Sigmoid colon (tissue), 7 donors: ENCODE measurements at regions of chr11 and their contacts with region 1.

Region 1: DNA sequence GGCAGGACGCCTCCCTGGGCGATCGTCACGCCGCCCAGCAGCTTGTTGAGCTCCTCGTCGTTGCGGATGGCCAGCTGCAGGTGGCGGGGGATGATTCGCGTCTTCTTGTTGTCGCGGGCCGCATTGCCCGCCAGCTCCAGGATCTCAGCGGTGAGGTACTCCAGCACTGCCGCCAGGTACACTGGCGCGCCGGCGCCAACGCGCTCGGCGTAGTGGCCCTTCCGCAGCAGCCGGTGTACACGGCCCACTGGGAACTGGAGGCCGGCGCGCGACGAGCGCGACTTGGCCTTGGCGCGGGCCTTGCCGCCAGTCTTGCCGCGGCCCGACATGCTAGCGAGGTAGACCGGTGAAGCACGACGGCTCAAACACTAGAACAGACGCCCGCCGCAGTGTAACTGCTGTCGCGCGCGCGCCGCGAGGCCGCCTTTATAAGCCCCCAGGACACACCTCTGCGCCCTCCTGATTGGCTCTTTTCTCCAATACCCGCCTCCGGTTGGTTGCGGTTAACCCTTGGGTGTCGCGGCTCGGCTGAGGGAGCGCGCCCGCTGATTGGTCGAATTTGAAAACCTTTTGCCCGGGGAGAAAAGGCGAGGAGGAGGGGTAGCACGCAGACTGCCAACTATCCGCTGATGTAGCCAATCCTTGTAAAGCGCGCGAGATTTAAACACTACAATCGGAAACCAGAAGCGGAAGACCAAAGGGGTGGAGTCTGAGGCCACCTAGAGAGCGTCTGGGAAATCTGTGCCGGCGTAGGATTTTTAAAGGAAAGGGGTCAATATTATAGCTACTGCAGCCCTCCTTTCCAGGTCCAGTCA is 6.4 kb downstream of the DPAGT1 start:
- DNase-seq: peak; percentile 100
- H3K4me3 ChIP-seq: peak overlapping the region; percentile 71 to 96 (median 86)
- H3K27ac ChIP-seq: peak overlapping the region; percentile 97 to 99 (median 98)
- H3K4me1 ChIP-seq: peaks cover 0 to 40% (median 25%) of the 10 kb centered on the region in 4 donors
- H3K27me3 ChIP-seq: no peaks in the 10 kb centered on the region
- CTCF ChIP-seq: peak in 2 of 4 experiments; percentile 4 to 36
- EP300 ChIP-seq: no peak
- POLR2A ChIP-seq: peak; percentile 94 to 97

Region 2: GRCh38 chr11:119018074-119018938 is 77.0 kb before region 1 on chr11 and contains the starts of genes RPS25 and TRAPPC4:
- intact Hi-C with region 1: loop called (anchors 5 kb)
- DNase-seq: peak; percentile 98
- H3K4me3 ChIP-seq: peak within 1 kb of the TSS; percentile 84 to 96 (median 90)
- H3K27ac ChIP-seq: peak within 1 kb of the TSS; percentile 96 to 98 (median 97)
- H3K4me1 ChIP-seq: peaks cover 0 to 48% (median 44%) of the 10 kb centered on the region in 4 donors
- H3K27me3 ChIP-seq: no peaks in the 10 kb centered on the region
- CTCF ChIP-seq: peak in 1 of 4 experiments; percentile 3
- EP300 ChIP-seq: no peak
- POLR2A ChIP-seq: peak; percentile 73 to 80
- total RNA-seq, gene RPS25: 1,350 to 3,369 (median 2,098) TPM
- total RNA-seq, gene TRAPPC4: 32.4 to 60.3 (median 47.5) TPM

Region 3: GRCh38 chr11:119196833-119197483 is 101.7 kb after region 1 on chr11:
- intact Hi-C with region 1: loop called (anchors 2 kb)
- DNase-seq: peak; percentile 77
- H3K4me3 ChIP-seq: no peak overlapping the region
- H3K27ac ChIP-seq: no peak overlapping the region
- H3K4me1 ChIP-seq: no peaks in the 10 kb centered on the region
- H3K27me3 ChIP-seq: no peaks in the 10 kb centered on the region
- CTCF ChIP-seq: peak; percentile 55 to 80 (median 72)
- EP300 ChIP-seq: no peak
- POLR2A ChIP-seq: no peak

Region 4: GRCh38 chr11:119315131-119316015 is 220.1 kb after region 1 on chr11:
- intact Hi-C with region 1: loop called (anchors 2 kb)
- DNase-seq: peak; percentile 79
- H3K4me3 ChIP-seq: peak overlapping the region; percentile 62 to 90 (median 76)
- H3K27ac ChIP-seq: peak overlapping the region; percentile 93 to 99 (median 96)
- H3K4me1 ChIP-seq: peaks cover 0 to 66% (median 49%) of the 10 kb centered on the region in 4 donors
- H3K27me3 ChIP-seq: no peaks in the 10 kb centered on the region
- CTCF ChIP-seq: peak in 2 of 4 experiments; percentile 19 to 42
- EP300 ChIP-seq: no peak
- POLR2A ChIP-seq: peak in 1 of 2 donors; percentile 23